CD4-positive, alpha-beta memory T cell (primary cell): ENCODE measurements at regions of chr7 and their contacts with region 1.

Region 1: GRCh38 chr7:35801392-35802101 is 690 bp downstream of the SEPTIN7 start:
- DNase-seq: peak; percentile 79 to 88 (median 81)
- H3K4me3 ChIP-seq: peak overlapping the region; percentile 4 to 67
- H3K4me3 Mint-ChIP-seq: peak overlapping the region; percentile 91 to 96 (median 94)
- H3K27ac ChIP-seq: peak overlapping the region; percentile 95
- H3K27ac Mint-ChIP-seq: peak overlapping the region; percentile 92 to 99 (median 99)
- H3K4me1 ChIP-seq: peaks cover 52% of the 10 kb centered on the region
- H3K4me1 Mint-ChIP-seq: peaks cover 35 to 61% (median 45%) of the 10 kb centered on the region in 4 donors
- H3K27me3 ChIP-seq: no peaks in the 10 kb centered on the region
- H3K27me3 Mint-ChIP-seq: no peaks in the 10 kb centered on the region

Region 2: DNA sequence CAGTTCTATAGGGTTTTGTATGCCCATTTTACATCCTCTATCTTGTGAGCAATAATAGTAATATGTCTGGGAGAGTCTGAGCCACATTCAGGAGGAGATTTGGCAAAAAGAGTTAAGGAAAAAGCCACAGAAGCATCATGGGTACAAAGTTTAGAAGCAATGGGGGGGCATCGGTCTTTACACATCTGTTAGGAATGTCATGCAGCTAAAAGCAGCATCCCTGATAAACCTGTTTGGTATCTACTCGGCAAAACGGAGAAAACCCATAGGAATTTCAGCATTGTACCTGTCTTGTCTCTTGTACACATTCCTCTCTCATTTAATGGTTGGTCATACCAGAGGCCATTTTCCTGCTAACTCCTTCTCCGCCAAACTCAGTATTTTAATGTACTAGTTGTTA is 94.1 kb before region 1 on chr7:
- CTCF ChIA-PET with region 1: interaction called, 33 read pairs
- POLR2A ChIA-PET with region 1: interaction called, 14 read pairs
- intact Hi-C with region 1: loop called (anchors 1 kb)
- DNase-seq: no peak
- H3K4me3 ChIP-seq: no peak overlapping the region
- H3K4me3 Mint-ChIP-seq: peak overlapping the region in 1 of 8 donors; percentile 20
- H3K27ac ChIP-seq: no peak overlapping the region
- H3K27ac Mint-ChIP-seq: peak overlapping the region in 2 of 7 donors; percentile 16 to 17
- H3K4me1 ChIP-seq: peaks cover 15% of the 10 kb centered on the region
- H3K4me1 Mint-ChIP-seq: peaks cover 9 to 24% (median 18%) of the 10 kb centered on the region in 4 donors
- H3K27me3 ChIP-seq: no peaks in the 10 kb centered on the region
- H3K27me3 Mint-ChIP-seq: no peaks in the 10 kb centered on the region

Region 3: GRCh38 chr7:35729061-35729783 is 72.3 kb before region 1 on chr7:
- CTCF ChIA-PET with region 1: interaction called, 11 read pairs
- POLR2A ChIA-PET with region 1: interaction called, 55 read pairs
- intact Hi-C with region 1: loop called (anchors 1 kb)
- DNase-seq: peak in 4 of 5 donors; percentile 15 to 83 (median 32)
- H3K4me3 ChIP-seq: no peak overlapping the region
- H3K4me3 Mint-ChIP-seq: peak overlapping the region in 7 of 8 donors; percentile 3 to 64 (median 46)
- H3K27ac ChIP-seq: peak overlapping the region; percentile 8
- H3K27ac Mint-ChIP-seq: peak overlapping the region in 6 of 7 donors; percentile 9 to 85 (median 22)
- H3K4me1 ChIP-seq: peaks cover 52% of the 10 kb centered on the region
- H3K4me1 Mint-ChIP-seq: peaks cover 33 to 51% (median 44%) of the 10 kb centered on the region in 4 donors
- H3K27me3 ChIP-seq: no peaks in the 10 kb centered on the region
- H3K27me3 Mint-ChIP-seq: no peaks in the 10 kb centered on the region

Region 4: DNA sequence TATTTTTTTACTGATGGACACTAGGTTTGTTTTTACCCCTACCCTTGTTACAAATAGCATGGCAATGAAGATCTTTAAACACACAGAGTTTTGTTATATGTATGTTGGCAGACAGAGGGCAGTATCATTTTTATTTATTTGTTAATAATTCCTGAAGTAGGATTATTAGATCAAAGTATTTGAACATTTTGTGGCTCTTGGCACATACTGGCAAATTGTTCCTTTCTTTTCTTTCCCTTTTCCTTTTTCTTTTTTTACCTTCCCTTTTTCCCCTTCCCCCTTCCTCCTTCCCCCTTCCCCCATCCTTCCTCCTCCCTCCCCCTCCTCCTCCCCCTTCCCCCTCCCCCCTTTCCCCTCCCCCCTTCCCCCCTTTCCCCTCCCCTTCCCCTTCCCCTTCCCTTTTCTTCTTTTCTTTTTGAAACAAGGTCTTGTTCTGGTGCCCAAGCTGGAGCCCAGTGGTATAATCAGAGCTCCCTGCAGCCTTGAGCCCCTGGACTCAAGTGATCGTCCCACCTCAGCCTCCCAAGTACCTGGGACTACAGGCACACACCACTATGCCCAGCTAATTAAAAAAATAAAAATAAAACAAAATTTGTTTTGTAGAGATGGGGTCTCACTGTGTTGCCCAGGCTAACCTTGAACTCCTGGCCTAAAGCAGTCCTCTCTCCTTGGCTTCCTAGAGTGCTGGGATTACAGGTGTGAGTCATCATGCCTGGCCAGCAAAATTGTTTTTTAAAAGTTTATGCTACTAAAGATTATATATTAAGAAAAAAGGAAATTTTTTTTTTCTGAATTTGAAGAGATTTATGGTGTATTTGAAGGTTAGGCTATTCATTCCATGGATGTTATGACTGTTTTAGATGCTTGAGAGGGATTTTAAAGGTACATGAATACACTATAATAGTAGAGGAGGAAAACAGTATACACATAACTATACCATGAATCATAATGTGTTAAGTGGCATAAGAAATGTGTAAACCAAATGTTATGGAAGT is 38.6 kb after region 1 on chr7:
- CTCF ChIA-PET with region 1: interaction called, 7 read pairs
- POLR2A ChIA-PET with region 1: interaction called, 6 read pairs
- intact Hi-C with region 1: loop called (anchors 5 kb)
- DNase-seq: no peak
- H3K4me3 ChIP-seq: no peak overlapping the region
- H3K4me3 Mint-ChIP-seq: no peak overlapping the region
- H3K27ac ChIP-seq: no peak overlapping the region
- H3K27ac Mint-ChIP-seq: no peak overlapping the region
- H3K4me1 ChIP-seq: peaks cover 27% of the 10 kb centered on the region
- H3K4me1 Mint-ChIP-seq: peaks cover 17 to 49% (median 35%) of the 10 kb centered on the region in 4 donors
- H3K27me3 ChIP-seq: no peaks in the 10 kb centered on the region
- H3K27me3 Mint-ChIP-seq: no peaks in the 10 kb centered on the region

Region 5: DNA sequence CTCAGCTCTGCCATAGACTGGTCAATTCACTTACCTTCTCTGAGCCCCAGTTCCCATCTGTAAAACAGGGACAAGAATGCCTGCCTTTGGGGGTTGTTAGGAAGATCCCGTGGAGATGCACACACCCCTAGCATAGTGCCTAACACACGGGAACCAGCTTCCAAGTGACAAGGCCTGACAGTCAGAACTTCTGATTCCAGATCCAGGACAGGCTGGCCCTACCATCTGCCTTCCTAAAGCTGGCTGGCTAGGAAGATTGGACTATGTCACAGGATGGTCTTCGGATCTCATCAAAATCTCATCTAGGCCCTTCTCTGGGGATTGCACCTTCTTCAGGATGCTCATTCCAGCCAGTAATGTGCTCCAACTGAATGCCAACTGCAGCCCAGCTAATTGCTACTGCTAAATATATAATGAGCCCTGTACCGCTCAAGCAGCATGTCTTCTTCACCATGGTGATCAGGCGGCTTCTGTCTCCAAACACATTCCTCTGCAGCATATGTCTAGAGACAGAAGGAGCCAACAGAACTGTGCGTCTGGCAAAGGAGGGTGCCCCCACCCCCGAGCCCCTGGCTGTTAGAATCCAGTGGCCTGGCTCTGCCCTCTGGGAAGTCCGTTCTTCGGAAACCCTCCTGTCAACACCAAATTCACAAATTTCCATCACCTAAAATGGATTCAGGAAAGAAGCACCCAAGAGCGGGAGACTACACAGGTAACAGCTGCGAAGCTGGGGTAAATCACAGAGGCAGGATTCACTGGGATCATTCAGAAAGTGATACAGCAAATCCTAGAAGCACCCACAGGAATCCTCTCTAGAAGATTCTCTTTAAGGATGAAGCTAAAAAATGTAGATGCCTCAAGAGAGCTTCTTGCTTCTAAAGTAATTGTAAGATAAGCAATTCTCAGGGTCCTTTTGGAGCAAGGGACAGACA is 209.4 kb after region 1 on chr7:
- CTCF ChIA-PET with region 1: no interaction called
- POLR2A ChIA-PET with region 1: no interaction called
- intact Hi-C with region 1: no loop called
- DNase-seq: no peak
- H3K4me3 ChIP-seq: no peak overlapping the region
- H3K4me3 Mint-ChIP-seq: no peak overlapping the region
- H3K27ac ChIP-seq: no peak overlapping the region
- H3K27ac Mint-ChIP-seq: no peak overlapping the region
- H3K4me1 ChIP-seq: no peaks in the 10 kb centered on the region
- H3K4me1 Mint-ChIP-seq: no peaks in the 10 kb centered on the region
- H3K27me3 ChIP-seq: no peaks in the 10 kb centered on the region
- H3K27me3 Mint-ChIP-seq: peaks cover 2 to 3% of the 10 kb centered on the region in 2 donors

Region 6: GRCh38 chr7:36152756-36153570 is 351.4 kb after region 1 on chr7 and contains the start of gene EEPD1:
- CTCF ChIA-PET with region 1: no interaction called
- POLR2A ChIA-PET with region 1: no interaction called
- intact Hi-C with region 1: loop called (anchors 1 kb)
- DNase-seq: peak; percentile 99 to 100 (median 100)
- H3K4me3 ChIP-seq: peak within 1 kb of the TSS; percentile 63 to 72
- H3K4me3 Mint-ChIP-seq: peak within 1 kb of the TSS; percentile 81 to 87 (median 84)
- H3K27ac ChIP-seq: peak within 1 kb of the TSS; percentile 53
- H3K27ac Mint-ChIP-seq: peak within 1 kb of the TSS; percentile 46 to 82 (median 73)
- H3K4me1 ChIP-seq: peaks cover 44% of the 10 kb centered on the region
- H3K4me1 Mint-ChIP-seq: peaks cover 17 to 48% (median 42%) of the 10 kb centered on the region in 4 donors
- H3K27me3 ChIP-seq: no peaks in the 10 kb centered on the region
- H3K27me3 Mint-ChIP-seq: no peaks in the 10 kb centered on the region
- total RNA-seq, gene EEPD1: 6.3 to 8.0 TPM